ENCODE measurements at regions of chr6 and their contacts with region 1.

Region 1: GRCh38 chr6:36546920-36547645 is at the start of gene STK38:
- DNase-seq: peak; percentile 95 to 97 (median 96)
- ATAC-seq: peak; percentile 96
- H3K4me3 ChIP-seq: peak within 1 kb of the TSS; percentile 83
- H3K4me1 ChIP-seq: peaks cover 31% of the 10 kb centered on the region
- CTCF ChIP-seq: no peak
- total RNA-seq, gene STK38: 67.3 to 80.7 (median 69.9) TPM

Region 2: DNA sequence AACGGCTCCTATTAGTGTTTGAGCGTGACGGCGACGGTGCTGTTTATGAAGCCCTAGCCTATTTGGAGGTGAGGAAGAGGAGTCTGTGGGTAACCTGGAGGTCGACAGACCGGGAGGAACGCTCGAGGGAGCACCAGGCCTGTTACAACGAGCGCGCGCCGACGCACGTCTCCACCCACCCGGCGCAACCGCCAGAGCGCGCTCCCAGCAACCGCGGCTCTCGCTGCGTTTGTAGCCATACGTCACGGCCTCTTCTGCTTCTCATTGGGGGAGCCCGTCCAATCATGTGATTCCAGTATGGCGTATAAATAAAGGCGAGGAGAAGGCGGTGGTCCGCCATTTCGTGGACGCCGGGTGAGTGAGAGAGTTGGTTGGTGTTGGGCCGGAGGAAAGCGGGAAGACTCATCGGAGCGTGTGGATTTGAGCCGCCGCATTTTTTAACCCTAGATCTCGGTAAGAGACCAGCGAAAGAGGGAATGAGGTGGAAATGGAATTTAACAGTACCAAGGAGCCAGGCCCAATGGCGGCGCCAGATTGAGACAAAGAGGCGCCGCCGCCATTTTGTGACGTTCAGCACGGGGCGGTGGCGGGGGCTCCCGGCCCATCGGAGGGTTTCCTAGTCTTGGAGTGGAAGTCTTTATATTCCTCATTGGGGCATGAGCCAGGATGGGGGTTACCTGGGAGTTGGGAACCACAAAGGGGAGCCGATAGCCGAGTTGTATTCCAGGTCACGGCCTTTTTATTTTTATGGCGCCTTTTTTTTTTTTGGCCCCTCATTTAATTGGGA is 47.1 kb after region 1 on chr6 and contains the start of gene SRSF3:
- intact Hi-C with region 1: loop called in 1 of 2 experiments (anchors 10 kb)
- DNase-seq: peak; percentile 97 to 98 (median 97)
- ATAC-seq: peak; percentile 98
- H3K4me3 ChIP-seq: peak within 1 kb of the TSS; percentile 58
- H3K4me1 ChIP-seq: peaks cover 24% of the 10 kb centered on the region
- CTCF ChIP-seq: peak; percentile 72
- total RNA-seq, gene SRSF3: 176 to 243 (median 229) TPM

Measured in mucosa of descending colon (tissue), 3 donors.